ENCODE measurements at regions of chr7 and their contacts with region 1.

Region 1: DNA sequence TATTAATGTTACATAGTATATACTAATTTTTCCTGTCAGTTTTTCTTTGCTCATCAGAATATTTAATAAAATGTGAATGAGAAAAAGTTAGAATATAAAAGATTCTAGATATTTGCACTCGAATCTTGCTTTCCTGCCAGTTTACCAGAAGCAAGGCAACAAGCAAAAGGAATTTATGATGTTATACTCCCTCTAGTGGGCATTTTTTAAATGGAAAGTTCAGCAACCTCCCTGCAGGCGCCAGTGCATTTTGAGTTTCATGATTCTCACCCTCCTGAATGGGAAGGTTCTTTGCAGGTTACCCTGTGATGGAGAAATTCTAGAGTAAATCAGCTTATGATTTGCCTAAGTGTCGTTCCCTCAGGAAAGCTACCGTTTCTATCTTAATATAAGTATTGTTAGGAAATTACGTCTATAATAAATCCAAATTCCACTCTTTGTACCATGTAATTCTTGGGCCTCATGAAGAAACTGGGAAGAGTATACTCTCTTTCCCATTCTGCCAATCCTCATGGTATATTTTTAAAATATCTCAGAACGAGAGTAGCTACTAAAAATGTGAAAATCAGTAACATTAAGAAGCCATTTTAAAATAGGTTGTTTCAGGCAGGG is 350.0 kb downstream of the CRPPA start:
- DNase-seq: no peak

Region 2: DNA sequence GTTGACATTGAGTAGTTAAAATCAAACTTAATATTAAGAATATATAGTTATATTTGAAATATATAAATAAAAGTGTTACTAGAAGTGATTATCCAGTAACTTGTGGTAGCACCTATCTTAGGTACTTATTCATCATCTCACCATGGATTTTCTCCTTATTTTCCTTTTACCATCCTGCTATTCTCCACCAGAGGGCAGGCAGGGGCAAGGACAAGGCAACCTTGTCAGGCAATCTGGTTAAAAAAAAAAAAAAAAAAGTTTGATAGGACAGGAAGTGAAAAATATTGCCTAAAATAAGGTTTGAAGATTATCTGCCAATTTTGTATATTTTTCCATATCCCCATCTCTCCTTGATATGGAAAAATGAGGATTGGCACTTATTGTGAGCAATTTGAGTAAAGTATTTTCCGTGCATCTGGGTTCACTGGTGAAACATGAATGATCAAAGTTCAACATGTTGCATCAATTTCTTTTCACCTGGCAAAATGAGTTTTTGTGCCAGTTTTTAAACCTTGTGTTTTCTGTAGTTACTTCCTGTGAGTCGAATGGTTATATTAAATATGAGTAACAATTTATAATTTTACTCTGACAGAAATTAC is 766.3 kb before region 1 on chr7:
- intact Hi-C with region 1: loop called (anchors 10 kb)
- DNase-seq: no peak

Region 3: DNA sequence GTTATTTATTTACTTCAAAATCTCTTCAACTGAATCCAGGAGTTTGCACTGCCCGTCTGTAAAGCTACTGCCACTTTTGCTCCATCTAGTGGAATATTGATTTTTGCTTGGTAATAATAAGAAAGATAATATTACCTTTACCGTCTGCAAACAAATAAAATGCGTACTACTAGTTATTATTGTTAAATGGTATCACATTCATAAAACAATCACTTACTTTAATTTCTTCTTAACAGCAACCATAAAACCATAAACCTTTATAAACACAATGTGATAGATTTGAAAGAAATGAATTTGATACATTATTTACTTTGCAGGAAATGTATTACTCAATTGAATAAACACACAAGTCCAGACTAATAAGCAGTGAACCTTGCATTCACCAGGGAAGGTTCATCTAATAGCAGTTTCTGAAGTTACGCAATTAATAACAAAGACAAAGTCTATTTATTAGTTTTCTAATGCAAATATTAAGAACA is 515.9 kb before region 1 on chr7:
- intact Hi-C with region 1: loop called (anchors 2 kb)
- DNase-seq: no peak

Region 4: GRCh38 chr7:15686295-15686956 is 384.9 kb before region 1 on chr7 and contains the start of gene MEOX2:
- intact Hi-C with region 1: loop called (anchors 2 kb)
- DNase-seq: peak; percentile 88
- total RNA-seq, gene MEOX2: 6.9 TPM

Measured in cardiac septum (tissue), 1 donor.